ENCODE measurements at regions of chr5 and their contacts with region 1.

Region 1: DNA sequence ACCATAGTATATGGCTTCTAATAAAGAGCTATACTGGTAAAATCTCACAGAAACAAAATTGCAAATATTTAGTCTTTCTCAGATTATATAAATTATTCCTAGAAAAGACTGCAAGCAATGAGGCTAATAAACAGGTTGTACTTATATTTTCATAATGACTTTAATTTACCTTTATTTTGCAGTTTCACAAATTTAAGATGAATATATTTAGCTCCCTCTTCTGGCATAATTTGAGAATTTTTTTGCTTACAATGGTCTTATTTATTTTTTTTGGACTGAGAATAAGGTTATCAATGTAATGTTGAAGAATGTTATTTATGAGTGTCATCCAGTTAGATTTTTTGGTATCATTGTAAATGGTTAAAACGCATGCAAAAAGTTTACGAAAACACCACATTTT is 56.7 kb downstream of the PIK3R1 start:
- DNase-seq: peak in 3 of 14 experiments; percentile 52 to 56 (median 54)
- ATAC-seq: no peak
- H3K4me3 ChIP-seq: no peak overlapping the region
- H3K4me3 Mint-ChIP-seq: no peak overlapping the region
- H3K27ac ChIP-seq: no peak overlapping the region
- H3K27ac Mint-ChIP-seq: peak overlapping the region; percentile 69
- H3K4me1 ChIP-seq: peaks cover 45% of the 10 kb centered on the region
- H3K4me1 Mint-ChIP-seq: peaks cover 96% of the 10 kb centered on the region
- H3K27me3 ChIP-seq: no peaks in the 10 kb centered on the region
- H3K27me3 Mint-ChIP-seq: no peaks in the 10 kb centered on the region
- CTCF ChIP-seq: peak; percentile 72

Region 2: GRCh38 chr5:66306105-66306843 is 1966.0 kb before region 1 on chr5:
- CTCF ChIA-PET with region 1: no interaction called
- POLR2A ChIA-PET with region 1: no interaction called
- intact Hi-C with region 1: loop called in 1 of 2 experiments (anchors 5 kb)
- DNase-seq: peak in 4 of 14 experiments; percentile 26 to 58 (median 48)
- ATAC-seq: peak; percentile 65
- H3K4me3 ChIP-seq: no peak overlapping the region
- H3K4me3 Mint-ChIP-seq: no peak overlapping the region
- H3K27ac ChIP-seq: no peak overlapping the region
- H3K27ac Mint-ChIP-seq: no peak overlapping the region
- H3K4me1 ChIP-seq: peaks cover 5% of the 10 kb centered on the region
- H3K4me1 Mint-ChIP-seq: peaks cover 10% of the 10 kb centered on the region
- H3K27me3 ChIP-seq: peaks cover 0 to 10% of the 10 kb centered on the region in 2 experiments
- H3K27me3 Mint-ChIP-seq: peaks cover 5% of the 10 kb centered on the region
- CTCF ChIP-seq: peak; percentile 77

Region 3: GRCh38 chr5:67156976-67157583 is 1115.2 kb before region 1 on chr5:
- CTCF ChIA-PET with region 1: interaction called, 5 read pairs
- POLR2A ChIA-PET with region 1: no interaction called
- intact Hi-C with region 1: loop called in 1 of 2 experiments (anchors 5 kb)
- DNase-seq: peak; percentile 42 to 81 (median 50)
- ATAC-seq: peak; percentile 55
- H3K4me3 ChIP-seq: no peak overlapping the region
- H3K4me3 Mint-ChIP-seq: peak overlapping the region; percentile 17
- H3K27ac ChIP-seq: no peak overlapping the region
- H3K27ac Mint-ChIP-seq: peak overlapping the region; percentile 71
- H3K4me1 ChIP-seq: peaks cover 45% of the 10 kb centered on the region
- H3K4me1 Mint-ChIP-seq: peaks cover 59% of the 10 kb centered on the region
- H3K27me3 ChIP-seq: no peaks in the 10 kb centered on the region
- H3K27me3 Mint-ChIP-seq: no peaks in the 10 kb centered on the region
- CTCF ChIP-seq: peak; percentile 96

Region 4: DNA sequence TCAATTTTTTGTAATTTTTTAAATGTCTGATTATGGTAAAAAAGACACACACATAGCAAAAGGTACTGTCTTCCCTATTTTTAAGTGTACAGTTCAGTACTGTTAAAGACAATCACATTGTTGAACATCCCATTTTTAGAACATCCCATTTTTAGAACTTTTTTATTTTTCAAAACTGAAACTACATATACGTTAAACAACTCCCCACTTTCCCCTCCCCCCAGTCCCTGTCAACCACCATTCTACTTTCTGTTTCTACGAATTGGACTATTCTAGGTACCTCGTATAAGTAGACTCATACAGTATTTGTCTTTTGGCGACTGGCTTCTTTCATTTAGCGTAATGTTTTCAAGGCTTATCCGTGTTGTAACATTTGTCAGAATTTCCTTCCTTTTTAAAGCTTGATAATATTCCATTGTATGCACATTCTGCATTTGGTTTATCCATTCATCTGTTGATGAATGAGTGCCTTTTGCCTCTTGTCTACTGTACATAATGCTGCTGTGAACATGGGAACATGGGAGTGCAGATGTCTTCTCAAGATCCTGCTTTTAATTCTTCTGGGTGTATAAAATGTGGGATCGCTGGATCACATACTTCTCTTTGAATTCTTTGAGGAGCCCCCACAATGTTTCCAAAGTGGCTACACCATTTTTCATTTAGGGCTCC is 97.3 kb after region 1 on chr5:
- CTCF ChIA-PET with region 1: no interaction called
- POLR2A ChIA-PET with region 1: no interaction called
- intact Hi-C with region 1: no loop called
- DNase-seq: peak in 10 of 14 experiments; percentile 7 to 84 (median 24)
- ATAC-seq: peak; percentile 83
- H3K4me3 ChIP-seq: peak overlapping the region; percentile 23
- H3K4me3 Mint-ChIP-seq: peak overlapping the region; percentile 66
- H3K27ac ChIP-seq: no peak overlapping the region
- H3K27ac Mint-ChIP-seq: peak overlapping the region; percentile 66
- H3K4me1 ChIP-seq: peaks cover 12% of the 10 kb centered on the region
- H3K4me1 Mint-ChIP-seq: peaks cover 33% of the 10 kb centered on the region
- H3K27me3 ChIP-seq: no peaks in the 10 kb centered on the region
- H3K27me3 Mint-ChIP-seq: no peaks in the 10 kb centered on the region
- CTCF ChIP-seq: no peak

Region 5: DNA sequence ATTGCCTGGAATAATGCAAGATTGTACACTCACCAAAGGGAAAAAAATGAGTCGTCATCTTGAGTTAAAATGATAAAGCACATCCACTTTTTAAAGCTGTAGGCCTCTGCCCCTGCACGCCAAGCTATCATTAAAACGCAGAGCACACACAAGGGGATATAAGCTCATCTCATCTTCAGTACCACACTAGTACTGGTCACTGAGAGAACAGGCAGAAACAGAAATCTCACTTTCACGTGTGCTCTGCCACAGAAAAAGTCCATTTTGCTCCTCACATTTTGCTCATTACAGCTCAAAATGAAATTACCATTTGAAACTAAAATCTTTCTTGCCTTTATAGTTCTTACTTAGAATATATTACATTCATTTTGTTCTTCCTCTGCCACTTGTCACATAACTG is 722.4 kb after region 1 on chr5:
- CTCF ChIA-PET with region 1: no interaction called
- POLR2A ChIA-PET with region 1: no interaction called
- intact Hi-C with region 1: no loop called
- DNase-seq: no peak
- ATAC-seq: no peak
- H3K4me3 ChIP-seq: no peak overlapping the region
- H3K4me3 Mint-ChIP-seq: no peak overlapping the region
- H3K27ac ChIP-seq: no peak overlapping the region
- H3K27ac Mint-ChIP-seq: no peak overlapping the region
- H3K4me1 ChIP-seq: no peaks in the 10 kb centered on the region
- H3K4me1 Mint-ChIP-seq: no peaks in the 10 kb centered on the region
- H3K27me3 ChIP-seq: no peaks in the 10 kb centered on the region
- H3K27me3 Mint-ChIP-seq: peaks cover 4% of the 10 kb centered on the region
- CTCF ChIP-seq: no peak